CD4-positive, alpha-beta T cell (primary cell): ENCODE measurements at regions of chr2 and their contacts with region 1.

Region 1: DNA sequence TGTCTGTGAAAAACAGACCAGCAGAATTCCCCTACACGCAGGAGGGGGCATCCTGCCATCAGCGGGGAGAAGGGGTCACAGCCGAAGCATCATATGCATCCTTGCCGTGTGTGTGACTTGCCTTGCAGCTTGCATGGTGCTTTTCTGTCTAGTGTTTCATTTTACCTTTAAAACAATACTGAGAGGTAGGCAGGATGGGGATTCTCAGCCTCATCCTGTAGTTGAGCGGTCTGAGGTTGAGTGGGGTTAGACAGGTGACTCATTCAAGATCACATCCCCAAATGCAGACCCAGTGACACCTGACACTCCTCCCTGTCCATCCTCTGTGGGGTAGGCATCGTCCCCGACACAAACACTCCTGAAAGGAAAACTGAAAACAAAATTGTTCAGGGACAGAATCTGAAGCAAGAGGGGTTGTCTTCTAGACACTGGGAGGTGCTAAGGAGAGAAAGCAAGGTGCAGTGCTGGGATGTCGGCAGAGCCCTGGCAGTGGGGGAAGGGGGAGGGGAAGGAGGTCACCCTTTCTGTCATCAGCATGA is 7.9 kb downstream of the ARL4C start:
- DNase-seq: peak; percentile 55 to 94 (median 69)
- ATAC-seq: peak; percentile 69
- H3K4me3 ChIP-seq: peak overlapping the region; percentile 94
- H3K4me3 Mint-ChIP-seq: peak overlapping the region; percentile 82
- H3K27ac ChIP-seq: peak overlapping the region; percentile 70 to 96
- H3K27ac Mint-ChIP-seq: peak overlapping the region; percentile 98
- H3K4me1 ChIP-seq: peaks cover 75% of the 10 kb centered on the region
- H3K4me1 Mint-ChIP-seq: peaks cover 92% of the 10 kb centered on the region
- H3K27me3 ChIP-seq: no peaks in the 10 kb centered on the region
- H3K27me3 Mint-ChIP-seq: no peaks in the 10 kb centered on the region
- CTCF ChIP-seq: no peak

Region 2: DNA sequence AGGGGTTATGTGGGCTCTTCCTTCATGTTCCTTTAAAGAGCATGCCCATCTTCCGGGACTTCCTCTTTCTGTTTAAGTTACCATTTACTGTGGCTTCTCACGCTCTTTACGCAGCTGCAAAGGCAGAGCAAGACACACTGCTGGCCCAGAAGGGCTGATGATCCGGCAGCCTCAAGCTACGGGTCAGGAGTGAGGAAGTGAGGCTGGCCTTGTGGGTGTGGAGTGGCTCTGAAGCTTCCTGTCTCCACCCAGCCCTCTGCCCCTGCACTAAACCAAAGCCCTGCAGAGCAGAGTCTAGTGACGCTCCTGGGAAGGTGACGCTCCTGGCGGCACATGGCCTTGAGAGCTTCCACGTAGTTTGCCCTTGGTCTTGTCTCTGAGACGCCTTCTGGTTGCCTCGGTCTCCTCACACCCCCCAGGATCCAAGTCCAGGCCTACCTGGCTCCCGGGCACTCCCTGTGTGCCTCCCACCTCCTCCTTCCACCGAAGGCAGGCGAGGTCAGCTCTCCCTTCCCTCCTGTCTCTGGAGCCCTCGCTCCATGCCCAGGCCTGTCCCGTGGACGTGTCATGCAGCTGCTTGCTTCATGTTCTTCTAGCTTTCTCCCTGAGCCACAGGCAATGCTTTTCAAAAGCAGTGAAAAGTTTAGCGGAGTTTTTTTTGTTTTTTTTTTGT is 42.4 kb before region 1 on chr2:
- CTCF ChIA-PET with region 1: interaction called, 4 read pairs
- POLR2A ChIA-PET with region 1: interaction called, 265 read pairs
- intact Hi-C with region 1: loop called in 1 of 2 experiments (anchors 5 kb)
- DNase-seq: peak; percentile 61 to 96 (median 74)
- ATAC-seq: peak; percentile 81
- H3K4me3 ChIP-seq: peak overlapping the region; percentile 18
- H3K4me3 Mint-ChIP-seq: peak overlapping the region; percentile 57
- H3K27ac ChIP-seq: peak overlapping the region; percentile 85 to 93
- H3K27ac Mint-ChIP-seq: peak overlapping the region; percentile 92
- H3K4me1 ChIP-seq: peaks cover 74% of the 10 kb centered on the region
- H3K4me1 Mint-ChIP-seq: peaks cover 86% of the 10 kb centered on the region
- H3K27me3 ChIP-seq: no peaks in the 10 kb centered on the region
- H3K27me3 Mint-ChIP-seq: no peaks in the 10 kb centered on the region
- CTCF ChIP-seq: no peak